ENCODE measurements at regions of chr3 and their contacts with region 1.

Region 1: GRCh38 chr3:111998636-111999483 is at the start of gene TAGLN3:
- DNase-seq: peak in 5 of 7 donors; percentile 23 to 70 (median 33)
- H3K4me3 ChIP-seq: peak within 1 kb of the TSS in 1 of 4 donors; percentile 48
- H3K27ac ChIP-seq: no peak within 1 kb of the TSS
- H3K4me1 ChIP-seq: peaks cover 0 to 8% of the 10 kb centered on the region in 2 donors
- H3K27me3 ChIP-seq: no peaks in the 10 kb centered on the region
- CTCF ChIP-seq: no peak
- POLR2A ChIP-seq: peak; percentile 13 to 50
- total RNA-seq, gene TAGLN3: 0.55 to 22.4 (median 11.2) TPM in 6 of 9 donors, not detected in the others

Region 2: DNA sequence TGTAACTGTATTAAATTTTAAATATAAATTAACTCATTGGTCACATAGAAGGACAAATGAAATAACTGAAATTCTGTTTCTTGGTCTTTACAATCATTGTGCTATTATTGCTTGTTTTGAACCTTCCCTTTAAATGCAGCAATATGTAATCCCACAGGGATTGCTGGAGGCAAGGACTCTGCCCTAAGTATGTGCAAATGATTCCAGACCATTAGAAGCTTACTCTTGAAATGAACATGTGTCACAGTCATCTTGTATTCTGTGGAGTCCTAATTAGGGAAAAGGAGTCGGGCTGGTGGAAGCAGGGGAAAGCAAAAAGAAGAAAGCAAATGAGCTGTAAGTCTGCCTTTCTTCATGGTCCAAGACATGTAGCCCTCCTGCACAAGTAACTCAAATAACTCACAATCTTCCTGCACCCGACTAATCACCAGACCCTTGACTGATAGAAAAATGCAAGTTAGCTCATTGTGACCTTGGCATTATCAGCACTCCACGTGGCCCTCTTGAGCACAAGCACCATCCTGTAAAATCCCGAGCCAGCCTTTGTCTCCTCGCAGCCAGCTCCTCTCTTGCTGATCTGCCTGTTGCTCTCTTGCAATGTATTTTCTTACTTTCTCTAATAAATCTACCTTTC is 33.4 kb after region 1 on chr3:
- intact Hi-C with region 1: no loop called
- DNase-seq: peak; percentile 39 to 83 (median 65)
- H3K4me3 ChIP-seq: no peak overlapping the region
- H3K27ac ChIP-seq: peak overlapping the region in 2 of 5 donors; percentile 20 to 59
- H3K4me1 ChIP-seq: peaks cover 5 to 11% of the 10 kb centered on the region in 2 donors
- H3K27me3 ChIP-seq: no peaks in the 10 kb centered on the region
- CTCF ChIP-seq: no peak
- POLR2A ChIP-seq: no peak

Region 3: GRCh38 chr3:112043603-112044201 is 44.8 kb after region 1 on chr3:
- intact Hi-C with region 1: loop called in 1 of 2 experiments (anchors 10 kb)
- DNase-seq: peak; percentile 52 to 75 (median 66)
- H3K4me3 ChIP-seq: peak overlapping the region in 1 of 4 donors; percentile 7
- H3K27ac ChIP-seq: no peak overlapping the region
- H3K4me1 ChIP-seq: peaks cover 0 to 4% of the 10 kb centered on the region in 2 donors
- H3K27me3 ChIP-seq: no peaks in the 10 kb centered on the region
- CTCF ChIP-seq: peak; percentile 85 to 95 (median 88)
- POLR2A ChIP-seq: no peak